GM10248 (cell line): ENCODE measurements at regions of chr17 and their contacts with region 1.

Region 1: GRCh38 chr17:34146440-34147043 is 108.5 kb upstream of the CCL2 start:
- DNase-seq: peak; percentile 61
- CTCF ChIP-seq: peak; percentile 66

Region 2: DNA sequence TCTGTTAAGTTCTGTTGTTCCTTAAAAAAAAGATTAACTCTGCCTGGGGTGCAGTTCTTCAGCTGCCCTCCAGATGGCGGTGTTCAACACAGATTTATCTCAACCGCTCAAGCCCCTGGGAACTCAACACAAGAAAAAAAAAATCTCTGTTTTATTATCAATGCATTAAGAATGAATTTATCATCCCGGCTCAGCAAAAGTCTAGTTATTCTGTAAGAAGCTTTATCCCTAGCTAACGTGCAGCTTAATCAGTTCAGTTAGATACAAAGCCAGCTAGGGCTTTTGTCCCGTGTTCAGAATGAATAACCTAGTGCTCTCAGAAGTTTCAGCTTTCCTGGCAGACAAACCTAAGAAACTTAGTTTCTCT is 367.3 kb before region 1 on chr17:
- CTCF ChIA-PET with region 1: interaction called, 64 read pairs
- POLR2A ChIA-PET with region 1: no interaction called
- DNase-seq: peak; percentile 51
- CTCF ChIP-seq: peak; percentile 86

Region 3: DNA sequence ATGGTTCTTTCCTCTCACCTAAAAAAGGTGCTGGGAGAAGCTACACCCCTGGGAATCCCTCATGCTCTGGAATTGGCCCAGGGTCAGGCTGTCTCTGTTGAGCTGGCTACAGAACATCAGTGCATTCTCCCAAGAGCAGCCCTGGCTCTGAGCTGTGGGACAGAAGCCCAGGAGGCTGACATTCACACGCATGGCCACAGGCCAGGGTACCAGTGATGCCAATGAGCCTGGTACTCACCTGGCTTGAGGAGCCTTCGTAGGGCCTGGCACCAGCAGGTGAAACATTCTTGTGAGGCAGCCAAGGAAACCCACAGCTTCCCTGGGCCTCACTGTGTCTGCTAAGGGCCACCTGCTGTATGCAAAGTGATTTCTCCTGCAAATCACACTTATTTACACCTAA is 13.2 kb before region 1 on chr17:
- CTCF ChIA-PET with region 1: interaction called, 17 read pairs
- POLR2A ChIA-PET with region 1: no interaction called
- DNase-seq: no peak
- CTCF ChIP-seq: no peak

Region 4: GRCh38 chr17:34156741-34157589 is 10.4 kb after region 1 on chr17:
- CTCF ChIA-PET with region 1: interaction called, 11 read pairs
- POLR2A ChIA-PET with region 1: no interaction called
- DNase-seq: no peak
- CTCF ChIP-seq: no peak